Endothelial cell of umbilical vein (primary cell): ENCODE measurements at regions of chr6 and their contacts with region 1.

Region 1: GRCh38 chr6:27503436-27504030 is 30.6 kb upstream of the ZNF184 start:
- DNase-seq: peak; percentile 83
- H3K4me3 ChIP-seq: peak overlapping the region; percentile 38 to 97 (median 95)
- H3K27ac ChIP-seq: peak overlapping the region; percentile 15
- H3K4me1 ChIP-seq: peaks cover 14% of the 10 kb centered on the region
- H3K27me3 ChIP-seq: peaks cover 5 to 11% of the 10 kb centered on the region in 2 experiments
- CTCF ChIP-seq: no peak
- POLR2A ChIP-seq: no peak

Region 2: DNA sequence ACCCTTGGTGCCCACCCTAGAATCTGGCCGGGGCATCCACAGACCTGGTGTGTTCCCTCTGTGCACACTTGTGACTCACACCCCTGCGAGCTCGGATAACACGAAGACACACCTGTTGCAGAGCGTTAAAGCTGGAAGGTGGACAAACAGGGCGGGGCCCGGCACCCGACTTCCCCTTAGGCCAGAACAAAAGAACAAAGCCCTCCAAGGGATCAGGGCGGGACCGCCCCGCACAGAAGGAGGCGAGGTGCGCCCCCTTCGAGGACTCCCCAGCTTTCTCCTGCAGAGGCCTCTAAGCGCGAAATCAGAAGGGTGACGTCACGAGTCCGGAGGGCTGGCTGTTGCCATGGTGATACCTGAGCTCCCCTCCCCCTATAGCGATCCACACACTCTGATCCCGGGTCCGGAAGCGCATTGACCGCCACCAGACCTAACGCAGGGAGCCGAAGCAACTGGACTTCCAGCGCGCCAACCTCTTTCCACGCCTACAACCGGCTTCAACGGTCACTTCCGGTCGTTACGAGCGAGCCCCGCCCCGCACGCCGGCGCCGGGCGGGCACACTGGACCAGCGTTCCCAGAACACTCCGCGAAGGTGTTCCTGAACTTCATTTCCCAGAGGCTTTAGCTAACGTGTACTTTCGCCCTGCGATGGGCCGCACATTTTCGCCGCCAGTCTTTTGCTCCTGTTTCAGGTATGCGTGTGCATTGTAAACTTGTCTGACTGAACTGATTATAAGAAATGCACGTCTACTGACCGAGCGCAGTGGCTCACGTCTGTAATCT is 30.7 kb before region 1 on chr6 and contains the start of gene ZNF184:
- CTCF ChIA-PET with region 1: interaction called, 4 read pairs
- POLR2A ChIA-PET with region 1: no interaction called
- dilution Hi-C with region 1: no loop called
- intact Hi-C with region 1: loop called (anchors 1 kb)
- DNase-seq: peak; percentile 98
- H3K4me3 ChIP-seq: peak within 1 kb of the TSS; percentile 68 to 94 (median 82)
- H3K27ac ChIP-seq: peak within 1 kb of the TSS; percentile 74
- H3K4me1 ChIP-seq: peaks cover 9% of the 10 kb centered on the region
- H3K27me3 ChIP-seq: peaks cover 9 to 14% of the 10 kb centered on the region in 2 experiments
- CTCF ChIP-seq: no peak
- POLR2A ChIP-seq: peak; percentile 84
- total RNA-seq, gene ZNF184: 5.4 and 6.5 TPM in 2 replicates

Region 3: GRCh38 chr6:27479319-27480182 is 24.0 kb before region 1 on chr6:
- CTCF ChIA-PET with region 1: interaction called, 7 read pairs
- POLR2A ChIA-PET with region 1: no interaction called
- dilution Hi-C with region 1: no loop called
- intact Hi-C with region 1: loop called (anchors 1 kb)
- DNase-seq: peak; percentile 94
- H3K4me3 ChIP-seq: peak overlapping the region; percentile 78 to 93 (median 88)
- H3K27ac ChIP-seq: peak overlapping the region; percentile 82
- H3K4me1 ChIP-seq: peaks cover 7% of the 10 kb centered on the region
- H3K27me3 ChIP-seq: peaks cover 11 to 16% of the 10 kb centered on the region in 2 experiments
- CTCF ChIP-seq: no peak
- POLR2A ChIP-seq: no peak

Region 4: DNA sequence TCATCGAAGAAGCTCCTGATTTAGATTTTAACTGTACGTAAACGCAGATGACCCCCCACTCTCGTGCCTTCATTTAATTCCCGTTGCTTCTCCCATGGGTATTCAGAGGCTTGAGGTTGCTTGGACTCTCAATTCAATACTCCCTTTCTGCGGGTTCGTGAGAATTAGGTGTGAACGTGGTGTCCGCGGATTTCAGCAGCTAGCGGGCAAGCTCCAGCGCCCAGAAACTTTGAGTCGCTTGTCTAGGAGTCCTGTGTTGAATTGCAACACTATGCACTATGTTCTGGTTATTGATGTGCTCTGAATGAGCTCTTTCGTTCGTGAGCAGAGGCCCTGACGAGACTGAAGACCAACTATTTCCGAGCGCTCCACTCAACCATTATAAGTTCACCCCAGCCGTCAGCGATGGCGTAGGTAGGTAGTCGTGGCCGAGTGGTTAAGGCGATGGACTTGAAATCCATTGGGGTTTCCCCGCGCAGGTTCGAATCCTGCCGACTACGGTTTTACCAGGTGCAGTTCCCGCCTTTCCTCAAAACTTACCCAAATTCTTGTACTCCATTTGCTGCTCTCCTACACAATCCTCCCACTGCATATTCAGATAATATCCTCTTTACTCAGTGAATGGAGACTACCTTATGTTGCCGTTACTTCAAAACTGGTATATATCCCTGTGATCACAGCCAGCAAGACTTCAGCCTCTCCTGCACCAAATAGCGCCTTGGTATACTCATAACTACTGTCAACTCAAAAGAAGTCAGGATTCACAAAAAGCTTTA is 41.9 kb after region 1 on chr6:
- CTCF ChIA-PET with region 1: no interaction called
- POLR2A ChIA-PET with region 1: no interaction called
- dilution Hi-C with region 1: no loop called
- intact Hi-C with region 1: loop called (anchors 1 kb)
- DNase-seq: peak; percentile 43
- H3K4me3 ChIP-seq: peak overlapping the region; percentile 0 to 74 (median 73)
- H3K27ac ChIP-seq: no peak overlapping the region
- H3K4me1 ChIP-seq: peaks cover 13% of the 10 kb centered on the region
- H3K27me3 ChIP-seq: peaks cover 0 to 6% of the 10 kb centered on the region in 2 experiments
- CTCF ChIP-seq: no peak
- POLR2A ChIP-seq: no peak

Region 5: GRCh38 chr6:27575594-27576361 is 72.2 kb after region 1 on chr6:
- CTCF ChIA-PET with region 1: no interaction called
- POLR2A ChIA-PET with region 1: no interaction called
- dilution Hi-C with region 1: no loop called
- intact Hi-C with region 1: no loop called
- DNase-seq: no peak
- H3K4me3 ChIP-seq: no peak overlapping the region
- H3K27ac ChIP-seq: no peak overlapping the region
- H3K4me1 ChIP-seq: no peaks in the 10 kb centered on the region
- H3K27me3 ChIP-seq: peaks cover 1 to 4% of the 10 kb centered on the region in 2 experiments
- CTCF ChIP-seq: no peak
- POLR2A ChIP-seq: no peak

Region 6: GRCh38 chr6:27592481-27593199 is 89.1 kb after region 1 on chr6:
- CTCF ChIA-PET with region 1: no interaction called
- POLR2A ChIA-PET with region 1: no interaction called
- dilution Hi-C with region 1: no loop called
- intact Hi-C with region 1: loop called (anchors 5 kb)
- DNase-seq: peak; percentile 44
- H3K4me3 ChIP-seq: peak overlapping the region in 2 of 3 experiments; percentile 54 to 69
- H3K27ac ChIP-seq: no peak overlapping the region
- H3K4me1 ChIP-seq: peaks cover 10% of the 10 kb centered on the region
- H3K27me3 ChIP-seq: peaks cover 13 to 14% of the 10 kb centered on the region in 2 experiments
- CTCF ChIP-seq: no peak
- POLR2A ChIP-seq: no peak

Region 7: GRCh38 chr6:27672113-27672799 is 168.7 kb after region 1 on chr6:
- CTCF ChIA-PET with region 1: no interaction called
- POLR2A ChIA-PET with region 1: no interaction called
- dilution Hi-C with region 1: no loop called
- intact Hi-C with region 1: loop called (anchors 5 kb)
- DNase-seq: peak; percentile 40
- H3K4me3 ChIP-seq: no peak overlapping the region
- H3K27ac ChIP-seq: no peak overlapping the region
- H3K4me1 ChIP-seq: peaks cover 10% of the 10 kb centered on the region
- H3K27me3 ChIP-seq: peaks cover 7 to 11% of the 10 kb centered on the region in 2 experiments
- CTCF ChIP-seq: no peak
- POLR2A ChIP-seq: no peak

Region 8: GRCh38 chr6:27902335-27903314 is 399.1 kb after region 1 on chr6:
- CTCF ChIA-PET with region 1: no interaction called
- POLR2A ChIA-PET with region 1: no interaction called
- dilution Hi-C with region 1: no loop called
- intact Hi-C with region 1: loop called (anchors 2 kb)
- DNase-seq: peak; percentile 92
- H3K4me3 ChIP-seq: peak overlapping the region; percentile 39 to 91 (median 86)
- H3K27ac ChIP-seq: peak overlapping the region; percentile 37
- H3K4me1 ChIP-seq: no peaks in the 10 kb centered on the region
- H3K27me3 ChIP-seq: peaks cover 0 to 11% of the 10 kb centered on the region in 2 experiments
- CTCF ChIP-seq: no peak
- POLR2A ChIP-seq: no peak